Heart right ventricle (tissue), 16 donors: ENCODE measurements at regions of chr1 and their contacts with region 1.

Region 1: DNA sequence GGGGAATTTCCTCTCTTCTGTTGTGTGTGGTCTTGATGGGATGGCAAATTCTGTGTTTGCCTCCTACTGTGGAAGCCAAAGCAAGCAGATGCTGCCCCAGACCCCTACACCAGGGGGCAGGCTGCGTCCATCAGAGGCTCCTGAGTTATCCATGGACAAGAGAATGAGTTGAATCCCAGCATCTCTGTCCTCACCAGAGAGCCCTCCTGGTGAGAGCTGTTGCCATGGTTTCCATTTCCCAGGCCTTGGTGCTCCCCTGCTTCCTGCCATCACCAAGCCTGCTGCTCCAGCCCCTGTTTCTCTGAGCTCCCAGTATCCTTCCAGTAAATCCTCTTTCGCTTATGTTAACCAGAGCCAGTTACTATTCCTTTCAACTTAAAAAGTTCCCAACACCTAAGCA is 20.4 kb upstream of the GNG12 start:
- DNase-seq: peak; percentile 54 to 59
- ATAC-seq: peak; percentile 58 to 86 (median 74)
- H3K4me3 ChIP-seq: no peak overlapping the region
- H3K27ac ChIP-seq: no peak overlapping the region
- H3K4me1 ChIP-seq: peaks cover 0 to 12% (median 9%) of the 10 kb centered on the region in 9 donors
- H3K27me3 ChIP-seq: no peaks in the 10 kb centered on the region
- CTCF ChIP-seq: peak; percentile 57 to 83 (median 76)

Region 2: DNA sequence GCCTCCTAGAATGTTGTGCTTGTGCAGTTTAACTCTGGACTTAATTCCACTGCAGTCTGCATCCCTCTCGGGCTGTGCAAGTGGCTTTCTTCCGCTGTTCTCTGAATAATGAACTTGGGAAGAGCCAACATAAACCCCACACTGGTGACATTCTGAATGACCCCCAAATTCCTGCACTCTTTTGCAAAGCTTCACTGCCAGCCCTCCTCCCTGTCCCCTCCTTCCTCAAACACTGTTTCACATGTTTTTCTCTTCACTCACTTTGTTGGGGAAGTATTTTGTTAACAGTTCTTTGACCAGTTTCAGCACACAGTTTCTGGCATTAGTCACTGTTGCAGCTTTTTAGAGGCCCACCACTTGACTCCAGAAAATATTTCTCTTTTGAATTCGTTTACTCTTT is 60.1 kb before region 1 on chr1:
- intact Hi-C with region 1: no loop called
- DNase-seq: no peak
- ATAC-seq: peak in 4 of 8 donors; percentile 40 to 66 (median 53)
- H3K4me3 ChIP-seq: no peak overlapping the region
- H3K27ac ChIP-seq: peak overlapping the region in 3 of 10 donors; percentile 29 to 44 (median 31)
- H3K4me1 ChIP-seq: peaks cover 0 to 55% (median 34%) of the 10 kb centered on the region in 9 donors
- H3K27me3 ChIP-seq: no peaks in the 10 kb centered on the region
- CTCF ChIP-seq: no peak

Region 3: GRCh38 chr1:67919274-67920072 is 65.8 kb after region 1 on chr1:
- intact Hi-C with region 1: loop called in 1 of 10 experiments (anchors 10 kb)
- DNase-seq: no peak
- ATAC-seq: no peak
- H3K4me3 ChIP-seq: no peak overlapping the region
- H3K27ac ChIP-seq: no peak overlapping the region
- H3K4me1 ChIP-seq: no peaks in the 10 kb centered on the region
- H3K27me3 ChIP-seq: no peaks in the 10 kb centered on the region
- CTCF ChIP-seq: no peak

Region 4: GRCh38 chr1:68010090-68010489 is 156.4 kb after region 1 on chr1:
- intact Hi-C with region 1: loop called in 9 of 10 experiments (anchors 2 to 5 kb)
- DNase-seq: no peak
- ATAC-seq: peak in 2 of 8 donors; percentile 58 to 64
- H3K4me3 ChIP-seq: no peak overlapping the region
- H3K27ac ChIP-seq: no peak overlapping the region
- H3K4me1 ChIP-seq: no peaks in the 10 kb centered on the region
- H3K27me3 ChIP-seq: no peaks in the 10 kb centered on the region
- CTCF ChIP-seq: peak in 8 of 9 donors; percentile 29 to 62 (median 46)

Region 5: GRCh38 chr1:68111519-68112436 is 258.1 kb after region 1 on chr1:
- intact Hi-C with region 1: loop called (anchors 2 to 10 kb)
- DNase-seq: peak; percentile 66 to 72
- ATAC-seq: peak; percentile 83 to 92 (median 90)
- H3K4me3 ChIP-seq: no peak overlapping the region
- H3K27ac ChIP-seq: peak overlapping the region in 1 of 10 donors; percentile 10
- H3K4me1 ChIP-seq: peaks cover 0 to 30% (median 17%) of the 10 kb centered on the region in 9 donors
- H3K27me3 ChIP-seq: no peaks in the 10 kb centered on the region
- CTCF ChIP-seq: peak; percentile 9 to 72 (median 53)

Region 6: GRCh38 chr1:68358439-68358838 is 504.7 kb after region 1 on chr1:
- intact Hi-C with region 1: loop called in 1 of 10 experiments (anchors 10 kb)
- DNase-seq: peak in 1 of 2 donors; percentile 33
- ATAC-seq: peak in 7 of 8 donors; percentile 11 to 70 (median 54)
- H3K4me3 ChIP-seq: no peak overlapping the region
- H3K27ac ChIP-seq: peak overlapping the region in 6 of 10 donors; percentile 14 to 56 (median 30)
- H3K4me1 ChIP-seq: peaks cover 0 to 27% (median 10%) of the 10 kb centered on the region in 9 donors
- H3K27me3 ChIP-seq: no peaks in the 10 kb centered on the region
- CTCF ChIP-seq: no peak